ENCODE measurements at regions of chr10 and their contacts with region 1.

Region 1: DNA sequence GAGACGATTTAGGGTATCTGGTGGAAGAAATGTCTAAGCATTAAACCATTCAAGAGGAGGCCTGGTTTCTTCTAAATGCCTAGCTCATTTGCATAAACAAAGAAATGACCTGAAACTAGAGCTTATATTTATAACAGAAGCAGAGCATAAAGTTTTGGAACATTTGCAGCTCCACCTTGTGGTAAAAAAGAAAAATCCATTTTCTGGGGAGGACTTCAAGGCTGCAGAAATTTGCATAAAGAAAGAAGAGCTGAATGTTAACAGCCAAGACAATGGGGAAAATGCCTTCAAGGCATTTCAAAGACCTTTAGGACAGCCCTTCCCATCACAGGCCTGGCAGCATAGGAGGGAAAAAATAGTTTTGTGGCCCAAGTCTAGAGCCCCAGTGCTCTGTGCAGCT is 362.0 kb downstream of the ZNF248 start:
- DNase-seq: no peak
- H3K4me3 Mint-ChIP-seq: no peak overlapping the region
- H3K27ac Mint-ChIP-seq: no peak overlapping the region
- H3K4me1 Mint-ChIP-seq: no peaks in the 10 kb centered on the region
- H3K27me3 Mint-ChIP-seq: no peaks in the 10 kb centered on the region

Region 2: DNA sequence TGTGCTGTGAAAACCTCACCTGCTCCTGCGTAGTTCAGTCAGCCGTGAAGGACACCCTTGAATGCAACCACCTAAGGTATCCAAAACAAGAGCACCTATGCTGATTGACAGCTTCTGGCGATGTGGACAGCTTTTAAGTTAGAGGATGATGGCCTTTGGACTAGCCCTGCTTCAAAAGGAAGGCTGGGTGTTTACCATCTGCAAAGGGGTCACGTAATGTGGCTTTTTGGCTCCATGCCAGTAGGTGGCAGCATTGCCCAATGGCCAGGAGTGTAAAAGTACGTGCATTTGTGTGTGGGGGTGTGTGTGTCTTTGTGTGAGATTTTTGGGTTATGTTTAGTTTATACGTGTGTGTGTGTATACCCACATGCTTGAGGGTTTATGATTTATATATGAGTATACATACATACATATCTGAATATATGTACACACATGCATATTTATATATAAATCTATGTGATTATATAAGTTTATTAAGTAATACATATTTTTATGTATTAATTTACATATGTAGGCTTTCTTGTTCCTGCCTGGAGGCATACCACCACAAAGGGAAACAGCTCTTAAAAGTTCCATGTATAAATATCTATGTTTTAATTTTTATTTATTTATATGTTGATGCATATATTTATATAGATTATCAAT is 606.4 kb before region 1 on chr10:
- CTCF ChIA-PET with region 1: interaction called, 3 read pairs
- intact Hi-C with region 1: loop called (anchors 5 kb)
- DNase-seq: peak; percentile 72
- H3K4me3 Mint-ChIP-seq: no peak overlapping the region
- H3K27ac Mint-ChIP-seq: no peak overlapping the region
- H3K4me1 Mint-ChIP-seq: no peaks in the 10 kb centered on the region
- H3K27me3 Mint-ChIP-seq: no peaks in the 10 kb centered on the region